K562 (cell line): ENCODE measurements at regions of chr6 and their contacts with region 1.

Region 1: DNA sequence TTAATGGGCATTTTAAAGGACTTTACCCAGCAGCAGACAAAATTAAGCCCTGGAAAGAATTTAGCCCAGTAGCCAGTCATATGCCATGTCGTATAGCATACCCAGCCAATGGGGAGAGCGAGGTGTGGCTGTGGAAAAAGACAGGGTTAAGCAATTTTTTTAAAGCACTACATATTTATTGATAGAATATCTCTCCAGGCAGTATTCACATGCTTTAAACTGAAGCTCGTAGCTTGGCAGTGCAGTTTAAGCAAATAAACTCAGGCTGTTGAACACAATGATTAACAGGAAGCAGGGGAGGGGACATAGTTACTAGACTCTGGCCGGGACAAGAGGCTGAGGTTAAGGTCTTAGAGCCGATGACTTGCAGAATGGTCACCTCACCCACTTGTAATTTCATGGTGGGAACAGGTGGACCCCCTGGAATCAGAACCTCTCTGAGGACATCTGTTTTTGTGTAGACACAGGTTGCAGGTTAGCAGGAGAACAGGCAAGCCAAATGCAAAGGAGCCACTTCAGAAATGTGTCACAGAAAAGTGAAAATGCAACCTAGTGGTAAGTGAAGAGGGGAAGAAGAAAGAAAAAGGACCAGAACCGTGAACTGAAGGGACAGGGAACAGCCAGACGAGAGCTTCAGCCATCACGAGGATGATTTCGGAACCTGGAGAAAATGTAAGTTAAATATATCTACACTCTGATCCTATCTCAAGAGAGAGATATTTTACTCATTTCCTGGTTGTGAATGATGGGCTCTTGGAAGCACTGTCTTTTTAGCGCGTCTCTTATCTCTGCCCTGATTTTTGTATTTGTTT is 7.2 kb downstream of the GCNT2 start:
- DNase-seq: no peak
- ATAC-seq: peak; percentile 46; the same call in 2 of the 3 replicates
- H3K4me3 ChIP-seq: no peak overlapping the region
- H3K27ac ChIP-seq: no peak overlapping the region
- H3K4me1 ChIP-seq: peaks cover 0 to 6% of the 10 kb centered on the region in 2 experiments; a peak in 2 of 5 replicates
- H3K27me3 ChIP-seq: no peaks in the 10 kb centered on the region
- CTCF ChIP-seq: no peak
- EP300 ChIP-seq: no peak
- POLR2A ChIP-seq: no peak
- RAD21 ChIP-seq: no peak

Region 2: DNA sequence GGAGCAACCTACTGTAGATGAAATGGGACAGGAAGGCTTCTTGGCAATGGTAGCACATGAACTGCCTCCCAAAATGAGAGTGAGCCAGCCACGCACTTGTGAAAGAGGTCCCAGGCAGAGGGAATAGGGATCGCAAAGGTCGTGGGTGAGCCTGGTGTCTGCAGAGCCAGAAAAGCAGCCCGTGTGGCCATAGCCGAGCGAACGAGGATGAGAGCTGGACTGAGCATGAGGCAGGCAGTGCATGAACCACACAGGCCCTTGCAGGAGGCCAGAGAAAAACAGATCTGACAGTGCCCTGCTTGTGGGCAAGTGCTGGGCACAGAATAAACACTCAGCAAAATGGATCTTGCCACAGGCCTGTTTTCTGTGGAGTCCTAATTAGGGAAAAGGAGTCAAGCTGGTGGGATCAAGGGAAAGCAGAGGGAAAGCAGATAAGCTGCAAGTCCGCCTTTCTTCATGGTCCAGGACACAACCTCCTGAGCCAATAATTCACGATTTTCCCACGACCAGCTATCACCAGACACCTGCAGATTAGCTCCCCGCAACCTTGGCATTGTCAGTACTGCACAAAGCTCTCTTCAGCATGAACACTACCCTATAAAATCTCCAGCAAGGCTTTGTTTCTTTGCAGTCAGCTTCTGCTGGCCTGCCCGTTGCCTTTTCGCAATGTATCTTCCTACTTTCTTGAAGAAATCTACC is 36.7 kb after region 1 on chr6:
- CTCF ChIA-PET with region 1: no interaction called
- POLR2A ChIA-PET with region 1: interaction called, 3 read pairs
- in situ Hi-C with region 1: no loop called
- intact Hi-C with region 1: loop called (anchors 1 kb)
- DNase-seq: no peak
- ATAC-seq: peak; percentile 44; the same call in 2 of the 3 replicates
- H3K4me3 ChIP-seq: no peak overlapping the region
- H3K27ac ChIP-seq: no peak overlapping the region
- H3K4me1 ChIP-seq: no peaks in the 10 kb centered on the region
- H3K27me3 ChIP-seq: peaks cover 14 to 44% of the 10 kb centered on the region in 2 experiments
- CTCF ChIP-seq: no peak
- EP300 ChIP-seq: no peak
- POLR2A ChIP-seq: no peak
- RAD21 ChIP-seq: no peak